ENCODE measurements at regions of chr15 and their contacts with region 1.

Region 1: DNA sequence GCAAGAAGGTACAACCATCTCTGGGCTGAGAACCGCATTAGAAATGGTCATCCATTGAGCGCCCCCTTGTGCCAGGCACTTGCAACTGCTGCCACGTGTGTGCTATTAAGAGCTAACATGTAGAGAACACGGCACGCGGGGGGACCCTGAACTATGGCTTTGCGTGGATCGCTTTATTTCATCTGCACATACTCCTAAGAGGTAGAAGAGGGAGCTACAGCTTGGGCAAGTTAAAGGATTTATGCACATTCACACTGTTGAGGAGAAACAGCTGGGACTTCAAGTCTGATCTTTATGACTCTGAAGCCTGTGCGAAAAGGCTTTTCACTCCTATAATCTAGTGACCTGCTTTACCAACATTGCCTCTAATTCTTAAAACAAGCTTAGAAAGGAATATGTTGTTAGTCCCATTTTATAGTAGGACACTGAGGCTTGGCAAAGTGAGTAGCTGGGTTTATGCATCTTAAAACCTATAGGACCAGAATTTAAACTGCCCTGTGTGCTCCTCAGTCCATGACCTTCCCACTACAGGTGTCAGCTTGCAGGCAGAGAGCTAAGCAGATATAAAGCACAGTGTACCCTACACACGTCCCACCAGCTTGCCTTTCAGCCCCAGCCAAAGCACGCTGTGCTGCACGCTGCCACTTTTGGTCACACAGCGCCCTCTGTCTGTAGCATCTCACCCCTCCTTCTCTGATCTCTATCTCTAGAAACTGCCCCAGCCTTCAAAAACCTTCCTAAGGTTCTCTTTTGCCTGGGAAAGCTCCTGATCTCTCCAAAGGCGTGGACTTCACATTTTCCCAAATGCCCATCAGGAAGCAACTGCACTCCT is 57.8 kb downstream of the STARD5 start:
- DNase-seq: peak; percentile 81 to 90 (median 87)
- H3K4me3 ChIP-seq: peak overlapping the region in 4 of 7 experiments; percentile 0 to 61 (median 35)
- H3K27ac ChIP-seq: no peak overlapping the region
- H3K4me1 ChIP-seq: peaks cover 7 to 29% (median 23%) of the 10 kb centered on the region in 4 experiments
- H3K27me3 ChIP-seq: no peaks in the 10 kb centered on the region

Region 2: GRCh38 chr15:81098861-81099651 is 167.1 kb before region 1 on chr15:
- CTCF ChIA-PET with region 1: interaction called, 53 read pairs
- POLR2A ChIA-PET with region 1: no interaction called
- DNase-seq: peak; percentile 86 to 90 (median 88)
- H3K4me3 ChIP-seq: peak overlapping the region in 5 of 7 experiments; percentile 4 to 61 (median 34)
- H3K27ac ChIP-seq: peak overlapping the region in 1 of 2 experiments; percentile 51
- H3K4me1 ChIP-seq: peaks cover 3 to 44% (median 30%) of the 10 kb centered on the region in 4 experiments
- H3K27me3 ChIP-seq: no peaks in the 10 kb centered on the region

Region 3: GRCh38 chr15:81111510-81112470 is 154.4 kb before region 1 on chr15:
- CTCF ChIA-PET with region 1: interaction called, 98 read pairs
- POLR2A ChIA-PET with region 1: interaction called, 3 read pairs
- DNase-seq: peak in 1 of 3 donors; percentile 40
- H3K4me3 ChIP-seq: no peak overlapping the region
- H3K27ac ChIP-seq: no peak overlapping the region
- H3K4me1 ChIP-seq: peaks cover 0 to 9% (median under 1%) of the 10 kb centered on the region in 4 experiments
- H3K27me3 ChIP-seq: peaks cover 0 to 3% (median 2%) of the 10 kb centered on the region in 5 experiments

Region 4: DNA sequence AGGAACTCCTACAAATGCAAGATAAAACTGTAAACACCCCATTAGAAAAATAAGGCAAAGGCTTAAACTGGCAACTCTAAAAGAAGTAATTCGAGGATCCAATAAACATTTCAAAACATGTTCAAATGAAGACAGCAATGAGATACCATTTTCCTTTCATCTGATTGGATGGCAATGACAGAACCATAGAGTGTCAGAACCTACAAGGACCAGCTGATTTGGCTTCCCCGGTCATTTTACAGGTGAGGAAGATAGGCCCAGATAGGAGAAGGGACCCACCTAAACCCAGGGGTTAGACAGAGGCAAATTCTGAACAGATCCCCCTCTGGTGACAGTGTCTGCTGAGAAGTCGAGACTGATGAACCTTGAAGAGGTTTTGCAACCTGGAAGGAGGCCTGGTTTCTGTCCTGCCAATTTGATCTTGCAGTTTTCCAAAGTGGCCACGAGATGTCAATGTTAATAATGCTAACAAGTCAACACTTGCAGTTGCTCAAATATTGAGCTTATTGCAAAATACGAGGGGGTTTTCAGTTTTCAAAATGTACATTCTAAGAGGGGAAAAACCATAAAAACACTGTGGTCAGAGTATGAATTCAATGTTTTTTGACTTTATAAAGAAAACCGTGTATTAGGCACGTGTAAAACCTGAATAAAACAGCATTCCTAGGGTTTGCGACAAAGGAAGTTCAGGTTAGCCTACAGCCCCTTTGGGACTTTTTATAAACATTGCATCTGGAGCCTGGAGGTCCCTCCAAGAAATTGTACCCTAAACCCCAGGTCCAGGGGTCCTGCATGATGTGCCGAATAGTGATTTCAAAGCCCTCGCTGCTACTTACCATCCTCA is 110.6 kb before region 1 on chr15:
- CTCF ChIA-PET with region 1: interaction called, 294 read pairs
- POLR2A ChIA-PET with region 1: no interaction called
- DNase-seq: peak; percentile 65 to 81 (median 79)
- H3K4me3 ChIP-seq: peak overlapping the region in 1 of 7 experiments; percentile 13
- H3K27ac ChIP-seq: no peak overlapping the region
- H3K4me1 ChIP-seq: peaks cover 0 to 13% (median 3%) of the 10 kb centered on the region in 4 experiments
- H3K27me3 ChIP-seq: peaks cover 0 to 4% (median 0%) of the 10 kb centered on the region in 5 experiments

Region 5: DNA sequence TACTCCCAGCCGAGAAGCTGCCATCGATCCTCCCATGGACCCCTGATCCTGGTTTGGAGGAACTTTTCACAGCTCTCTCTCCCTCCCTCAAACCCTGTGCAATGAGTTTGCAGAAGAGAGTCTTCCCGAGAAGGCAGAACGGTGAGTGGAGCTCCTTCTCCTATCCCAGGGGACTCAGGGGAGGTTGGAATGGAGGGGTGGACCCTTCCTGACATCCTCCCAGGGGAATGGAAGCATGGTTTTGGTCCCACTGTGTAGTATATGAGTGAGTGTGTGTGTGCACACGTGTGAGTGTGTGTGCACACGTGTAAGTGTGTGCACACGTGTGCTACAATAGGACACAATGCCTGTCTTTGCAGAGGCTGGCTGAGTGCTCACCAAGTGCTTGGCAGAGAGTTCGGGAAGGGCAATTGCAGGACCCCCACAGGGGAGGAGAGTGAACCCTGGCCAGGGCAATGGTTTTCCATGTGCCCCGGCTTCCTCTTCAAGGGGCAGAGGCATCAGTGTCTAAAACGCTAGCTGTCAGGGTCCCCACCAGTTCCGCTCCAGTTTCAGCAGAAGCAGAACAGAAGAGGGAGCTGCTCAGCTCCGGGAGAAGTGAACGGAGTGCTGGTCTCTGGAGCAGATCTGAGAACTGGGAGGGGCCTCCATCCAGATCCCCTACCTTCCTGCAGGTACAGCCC is 83.3 kb before region 1 on chr15:
- CTCF ChIA-PET with region 1: interaction called, 22 read pairs
- POLR2A ChIA-PET with region 1: no interaction called
- DNase-seq: peak; percentile 18 to 37 (median 28)
- H3K4me3 ChIP-seq: peak overlapping the region in 5 of 7 experiments; percentile 0 to 63 (median 32)
- H3K27ac ChIP-seq: no peak overlapping the region
- H3K4me1 ChIP-seq: peaks cover 8 to 31% (median 19%) of the 10 kb centered on the region in 4 experiments
- H3K27me3 ChIP-seq: peaks cover 0 to 8% (median 0%) of the 10 kb centered on the region in 5 experiments

Region 6: GRCh38 chr15:81400640-81401236 is 134.6 kb after region 1 on chr15:
- CTCF ChIA-PET with region 1: interaction called, 162 read pairs
- POLR2A ChIA-PET with region 1: no interaction called
- DNase-seq: peak; percentile 61 to 73 (median 65)
- H3K4me3 ChIP-seq: no peak overlapping the region
- H3K27ac ChIP-seq: no peak overlapping the region
- H3K4me1 ChIP-seq: no peaks in the 10 kb centered on the region
- H3K27me3 ChIP-seq: no peaks in the 10 kb centered on the region

Region 7: GRCh38 chr15:81433462-81433861 is 167.3 kb after region 1 on chr15:
- CTCF ChIA-PET with region 1: no interaction called
- POLR2A ChIA-PET with region 1: no interaction called
- DNase-seq: no peak
- H3K4me3 ChIP-seq: no peak overlapping the region
- H3K27ac ChIP-seq: no peak overlapping the region
- H3K4me1 ChIP-seq: no peaks in the 10 kb centered on the region
- H3K27me3 ChIP-seq: no peaks in the 10 kb centered on the region

Region 8: GRCh38 chr15:81473177-81473576 is 207.0 kb after region 1 on chr15:
- CTCF ChIA-PET with region 1: no interaction called
- POLR2A ChIA-PET with region 1: no interaction called
- DNase-seq: no peak
- H3K4me3 ChIP-seq: no peak overlapping the region
- H3K27ac ChIP-seq: no peak overlapping the region
- H3K4me1 ChIP-seq: no peaks in the 10 kb centered on the region
- H3K27me3 ChIP-seq: no peaks in the 10 kb centered on the region

Measured in common myeloid progenitor, CD34-positive (primary cell).